Heart left ventricle (tissue), 16 donors: ENCODE measurements at regions of chr1 and their contacts with region 1.

Region 1: GRCh38 chr1:228275739-228276421 is 68.0 kb downstream of the OBSCN start:
- DNase-seq: peak; percentile 88 to 90 (median 90)
- ATAC-seq: peak; percentile 63 to 85 (median 68)
- H3K4me3 ChIP-seq: peak overlapping the region; percentile 23 to 70 (median 61)
- H3K27ac ChIP-seq: peak overlapping the region in 11 of 12 donors; percentile 30 to 80 (median 65)
- H3K4me1 ChIP-seq: peaks cover 0 to 25% (median 9%) of the 10 kb centered on the region in 12 donors
- H3K27me3 ChIP-seq: no peaks in the 10 kb centered on the region
- CTCF ChIP-seq: no peak
- POLR2A ChIP-seq: no peak

Region 2: GRCh38 chr1:228212966-228213844 is 62.7 kb before region 1 on chr1:
- intact Hi-C with region 1: no loop called
- DNase-seq: peak; percentile 81 to 93 (median 87)
- ATAC-seq: peak; percentile 43 to 68 (median 64)
- H3K4me3 ChIP-seq: peak overlapping the region in 11 of 12 donors; percentile 24 to 62 (median 47)
- H3K27ac ChIP-seq: peak overlapping the region in 6 of 12 donors; percentile 22 to 99 (median 54)
- H3K4me1 ChIP-seq: peaks cover 0 to 58% (median 20%) of the 10 kb centered on the region in 12 donors
- H3K27me3 ChIP-seq: peaks cover 0 to 10% (median 0%) of the 10 kb centered on the region in 9 donors
- CTCF ChIP-seq: peak in 11 of 12 donors; percentile 27 to 59 (median 46)
- POLR2A ChIP-seq: no peak

Region 3: GRCh38 chr1:228226956-228227791 is 48.7 kb before region 1 on chr1:
- intact Hi-C with region 1: loop called in 1 of 10 experiments (anchors 5 kb)
- DNase-seq: no peak
- ATAC-seq: peak; percentile 12 to 33 (median 22)
- H3K4me3 ChIP-seq: no peak overlapping the region
- H3K27ac ChIP-seq: peak overlapping the region in 2 of 12 donors; percentile 3 to 8
- H3K4me1 ChIP-seq: peaks cover 0 to 55% (median 7%) of the 10 kb centered on the region in 12 donors
- H3K27me3 ChIP-seq: no peaks in the 10 kb centered on the region
- CTCF ChIP-seq: peak in 3 of 12 donors; percentile 4 to 9 (median 6)
- POLR2A ChIP-seq: no peak

Region 4: GRCh38 chr1:228345201-228345930 is 69.5 kb after region 1 on chr1:
- intact Hi-C with region 1: no loop called
- DNase-seq: peak; percentile 13 to 61 (median 22)
- ATAC-seq: no peak
- H3K4me3 ChIP-seq: no peak overlapping the region
- H3K27ac ChIP-seq: peak overlapping the region in 3 of 12 donors; percentile 18 to 78 (median 34)
- H3K4me1 ChIP-seq: peaks cover 0 to 31% (median 7%) of the 10 kb centered on the region in 12 donors
- H3K27me3 ChIP-seq: no peaks in the 10 kb centered on the region
- CTCF ChIP-seq: no peak
- POLR2A ChIP-seq: no peak

Region 5: DNA sequence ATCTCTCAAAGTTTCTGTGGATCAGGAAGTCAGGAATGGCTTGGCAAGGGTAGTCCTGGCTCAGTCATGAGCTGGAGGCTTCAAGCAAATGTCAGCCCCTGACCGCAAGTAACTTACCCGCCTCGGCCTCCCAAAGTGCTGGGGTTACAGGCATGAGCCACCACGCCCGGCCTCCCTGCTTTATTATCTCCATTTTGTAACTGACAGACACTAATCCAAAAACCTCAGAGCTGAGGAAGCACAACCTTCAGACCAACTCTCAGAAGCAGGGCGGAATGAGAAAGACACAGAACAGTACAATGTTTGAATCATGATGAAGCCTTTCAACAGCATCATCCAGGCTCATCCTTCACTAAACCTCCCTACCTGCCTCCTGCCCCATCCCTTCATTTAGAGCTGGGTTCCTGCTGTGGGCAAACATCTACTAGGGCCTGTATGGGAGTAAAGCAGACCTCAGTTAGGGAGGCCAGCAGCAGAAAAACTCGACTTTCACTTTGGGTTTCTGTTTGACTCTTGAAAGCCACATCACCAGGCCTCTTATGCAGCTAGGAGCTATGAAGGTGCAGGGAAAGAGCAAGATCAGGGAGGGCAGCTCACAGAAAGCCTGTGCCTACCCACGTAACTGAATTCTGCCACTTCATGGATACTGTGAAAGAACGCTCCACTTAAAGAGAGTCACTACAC is 910.6 kb after region 1 on chr1:
- intact Hi-C with region 1: no loop called
- DNase-seq: no peak
- ATAC-seq: no peak
- H3K4me3 ChIP-seq: no peak overlapping the region
- H3K27ac ChIP-seq: no peak overlapping the region
- H3K4me1 ChIP-seq: peaks cover 0 to 13% (median 0%) of the 10 kb centered on the region in 12 donors
- H3K27me3 ChIP-seq: no peaks in the 10 kb centered on the region
- CTCF ChIP-seq: no peak
- POLR2A ChIP-seq: no peak